ENCODE measurements at regions of chr1 and their contacts with region 1.

Region 1: DNA sequence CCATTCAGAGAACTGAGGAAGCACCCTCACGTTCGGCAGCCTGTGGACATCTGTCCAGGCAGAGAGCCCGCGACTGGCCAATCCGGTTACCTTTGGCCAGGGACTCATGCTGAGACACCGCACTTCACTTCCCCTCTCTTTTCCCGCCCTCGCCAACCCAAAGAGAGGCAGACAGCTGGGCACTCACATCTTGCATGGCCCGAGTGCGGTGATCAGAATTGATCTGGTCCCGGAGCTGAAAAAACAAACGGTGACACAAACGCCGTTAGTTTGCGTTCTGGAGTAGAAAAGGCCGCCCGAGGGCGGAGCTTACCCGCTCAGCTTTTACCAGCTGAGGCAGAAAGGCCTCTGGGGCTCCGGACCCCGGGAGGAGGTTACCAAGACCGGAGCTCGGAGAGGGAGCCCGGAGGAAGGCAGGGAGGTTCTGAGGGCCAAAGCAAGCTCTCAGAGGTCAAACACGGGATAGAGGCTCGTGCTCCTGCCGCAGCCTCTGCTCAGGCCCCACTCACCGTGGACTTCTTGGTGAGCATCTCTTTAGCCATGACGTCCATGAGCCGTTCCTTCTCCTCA is 376 bp downstream of the SF3A3 start:
- DNase-seq: no peak
- ATAC-seq: peak; percentile 50
- H3K4me3 ChIP-seq: peak overlapping the region; percentile 68 to 85
- H3K27ac ChIP-seq: peak overlapping the region; percentile 91
- H3K4me1 ChIP-seq: peaks cover 10% of the 10 kb centered on the region
- H3K27me3 ChIP-seq: no peaks in the 10 kb centered on the region
- CTCF ChIP-seq: no peak

Region 2: GRCh38 chr1:38018864-38019343 is 29.5 kb after region 1 on chr1:
- CTCF ChIA-PET with region 1: no interaction called
- POLR2A ChIA-PET with region 1: interaction called, 3 read pairs
- in situ Hi-C with region 1: no loop called
- intact Hi-C with region 1: loop called (anchors 1 kb)
- DNase-seq: no peak
- ATAC-seq: peak; percentile 71
- H3K4me3 ChIP-seq: no peak overlapping the region
- H3K27ac ChIP-seq: no peak overlapping the region
- H3K4me1 ChIP-seq: peaks cover 18% of the 10 kb centered on the region
- H3K27me3 ChIP-seq: no peaks in the 10 kb centered on the region
- CTCF ChIP-seq: peak; percentile 78